A673 (cell line): ENCODE measurements at regions of chr15 and their contacts with region 1.

Region 1: DNA sequence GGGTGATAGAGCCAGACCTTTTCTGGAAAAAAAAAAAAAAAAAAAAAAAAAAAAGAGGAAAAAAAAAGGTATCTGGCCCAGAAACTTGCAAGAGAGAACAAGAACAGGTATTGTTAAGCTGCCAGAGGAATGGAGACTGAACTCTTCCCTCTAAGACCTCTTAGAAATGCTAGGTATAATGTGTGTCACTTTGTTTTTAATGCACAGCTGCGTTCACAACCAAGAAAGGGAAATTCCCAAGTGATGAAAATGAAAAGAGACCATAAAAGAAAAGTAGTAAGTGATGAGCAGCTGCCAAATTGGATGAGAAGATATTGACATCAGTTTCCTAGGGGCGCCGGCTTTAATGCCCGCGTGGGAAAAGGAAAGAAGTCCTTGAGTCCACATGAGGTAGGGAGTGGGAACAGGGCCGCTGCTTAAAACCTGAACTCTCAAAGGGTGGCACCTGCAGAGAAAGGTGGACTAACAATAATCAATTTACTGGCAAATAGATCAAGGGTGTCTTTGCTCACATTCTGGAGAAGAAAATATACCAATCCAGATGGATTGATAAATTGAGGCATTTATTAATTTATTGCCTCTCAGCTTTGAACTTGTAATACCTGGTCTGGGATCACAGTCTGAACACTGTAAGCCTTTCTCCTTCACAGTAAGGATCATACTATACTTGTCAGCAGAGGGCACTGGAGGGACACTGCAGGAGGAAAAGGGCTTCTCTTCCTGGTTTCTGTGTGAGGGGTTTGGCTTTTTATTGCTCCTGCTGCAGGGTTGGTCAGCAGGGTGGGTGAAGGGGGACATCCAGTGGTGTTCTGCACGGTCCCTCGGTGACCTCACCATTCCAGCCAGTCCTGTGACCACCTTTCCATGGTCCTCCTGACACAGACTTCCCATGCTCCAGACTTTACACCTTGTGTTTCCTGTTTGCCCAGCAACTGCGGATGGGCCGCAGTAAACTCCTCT is 131.6 kb downstream of the AQP9 start:
- DNase-seq: peak; percentile 79
- H3K4me3 ChIP-seq: no peak overlapping the region
- H3K27ac ChIP-seq: no peak overlapping the region
- H3K4me1 ChIP-seq: no peaks in the 10 kb centered on the region
- H3K27me3 ChIP-seq: no peaks in the 10 kb centered on the region
- CTCF ChIP-seq: peak; percentile 75

Region 2: GRCh38 chr15:58462547-58462946 is 192.8 kb after region 1 on chr15:
- CTCF ChIA-PET with region 1: interaction called, 17 read pairs
- POLR2A ChIA-PET with region 1: no interaction called
- intact Hi-C with region 1: no loop called
- DNase-seq: no peak
- H3K4me3 ChIP-seq: no peak overlapping the region
- H3K27ac ChIP-seq: no peak overlapping the region
- H3K4me1 ChIP-seq: peaks cover 7% of the 10 kb centered on the region
- H3K27me3 ChIP-seq: no peaks in the 10 kb centered on the region
- CTCF ChIP-seq: no peak

Region 3: DNA sequence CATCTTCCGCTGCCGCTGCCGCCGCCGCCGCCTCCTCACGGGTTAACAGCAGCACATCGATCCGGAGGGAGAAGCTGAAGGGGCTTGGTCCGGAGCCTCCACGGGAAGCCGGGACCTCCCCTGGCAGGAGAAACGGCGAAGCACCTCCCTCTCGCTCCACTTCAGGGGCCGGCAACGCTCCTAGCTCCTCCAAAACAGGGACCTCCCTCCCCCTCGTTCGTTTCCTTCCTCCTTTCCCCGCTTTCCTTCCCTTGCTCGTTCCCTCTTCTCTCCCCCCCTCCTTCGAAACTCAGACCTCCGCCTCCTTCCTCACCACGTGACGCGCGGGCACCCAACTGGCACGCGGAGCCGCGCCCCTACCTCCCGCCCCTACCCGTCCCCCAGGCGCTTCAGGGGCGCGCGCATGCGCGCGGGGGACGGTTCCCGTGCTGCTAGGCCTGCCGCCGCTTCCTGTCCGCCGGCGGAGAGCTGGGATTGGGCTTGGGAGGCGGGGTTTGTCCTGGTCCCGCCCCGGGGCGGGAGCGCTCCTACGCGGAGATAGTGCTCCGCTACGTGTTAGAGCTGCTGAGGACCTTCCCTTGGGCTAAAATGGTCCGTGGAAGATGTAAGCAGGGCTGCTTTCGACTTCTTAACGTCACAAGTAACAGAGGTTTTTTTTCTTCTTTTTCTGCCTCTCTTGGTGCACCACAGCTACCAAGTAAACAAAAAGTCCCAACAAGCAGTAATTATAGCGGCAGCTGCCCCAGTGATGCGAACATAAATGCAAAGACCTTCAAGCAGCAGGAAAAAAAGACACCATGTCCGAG is 480.0 kb after region 1 on chr15 and contains the start of gene ADAM10:
- CTCF ChIA-PET with region 1: interaction called, 3 read pairs
- POLR2A ChIA-PET with region 1: no interaction called
- intact Hi-C with region 1: loop called (anchors 10 kb)
- DNase-seq: peak; percentile 100
- H3K4me3 ChIP-seq: peak within 1 kb of the TSS; percentile 67
- H3K27ac ChIP-seq: peak within 1 kb of the TSS; percentile 92
- H3K4me1 ChIP-seq: peaks cover 14% of the 10 kb centered on the region
- H3K27me3 ChIP-seq: no peaks in the 10 kb centered on the region
- CTCF ChIP-seq: no peak
- total RNA-seq, gene ADAM10: 116 and 130 TPM in 2 replicates

Region 4: GRCh38 chr15:58770857-58771620 is 501.3 kb after region 1 on chr15 and contains the start of gene MINDY2:
- CTCF ChIA-PET with region 1: no interaction called
- POLR2A ChIA-PET with region 1: no interaction called
- intact Hi-C with region 1: loop called (anchors 5 kb)
- DNase-seq: peak; percentile 99
- H3K4me3 ChIP-seq: peak within 1 kb of the TSS; percentile 85
- H3K27ac ChIP-seq: peak within 1 kb of the TSS; percentile 83
- H3K4me1 ChIP-seq: peaks cover 10% of the 10 kb centered on the region
- H3K27me3 ChIP-seq: no peaks in the 10 kb centered on the region
- CTCF ChIP-seq: peak; percentile 53
- total RNA-seq, gene MINDY2: 13.0 and 14.1 TPM in 2 replicates

Region 5: GRCh38 chr15:58839485-58839884 is 569.8 kb after region 1 on chr15:
- CTCF ChIA-PET with region 1: interaction called, 12 read pairs
- POLR2A ChIA-PET with region 1: no interaction called
- intact Hi-C with region 1: no loop called
- DNase-seq: peak; percentile 14
- H3K4me3 ChIP-seq: no peak overlapping the region
- H3K27ac ChIP-seq: no peak overlapping the region
- H3K4me1 ChIP-seq: no peaks in the 10 kb centered on the region
- H3K27me3 ChIP-seq: no peaks in the 10 kb centered on the region
- CTCF ChIP-seq: peak; percentile 48